ENCODE measurements at regions of chr19 and their contacts with region 1.

Region 1: DNA sequence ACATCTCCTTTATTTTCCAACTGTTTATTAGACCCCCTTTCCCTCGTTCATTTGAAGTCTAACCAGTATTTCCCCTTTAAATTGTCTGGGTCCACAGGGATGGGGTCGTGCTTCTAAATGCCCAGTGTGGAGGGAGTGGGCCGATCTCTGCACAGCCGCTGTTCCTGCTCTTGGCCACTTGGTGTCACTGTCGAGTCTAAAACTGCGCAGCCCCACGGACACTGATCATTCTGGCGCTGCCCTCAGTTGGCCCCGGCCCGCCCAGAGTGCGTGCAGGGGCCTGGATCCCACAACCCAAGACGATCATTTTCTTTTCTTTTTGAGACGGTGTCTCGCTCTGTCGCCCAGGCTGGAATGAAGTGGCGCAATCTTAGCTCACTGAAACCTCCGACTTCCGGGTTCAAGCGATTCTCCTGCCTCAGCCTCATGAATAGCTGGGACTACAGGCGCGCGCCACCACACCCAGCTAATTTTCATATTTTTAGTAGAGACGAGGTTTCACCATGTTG is 12.0 kb downstream of the WDR88 start:
- DNase-seq: peak; percentile 51 to 84
- ATAC-seq: peak; percentile 94 to 100 (median 100)
- H3K4me3 ChIP-seq: no peak overlapping the region
- H3K4me3 Mint-ChIP-seq: no peak overlapping the region
- H3K27ac ChIP-seq: no peak overlapping the region
- H3K27ac Mint-ChIP-seq: peak overlapping the region in 1 of 2 donors; percentile 13
- H3K4me1 ChIP-seq: peaks cover 5% of the 10 kb centered on the region
- H3K4me1 Mint-ChIP-seq: peaks cover 5 to 7% of the 10 kb centered on the region in 2 donors
- H3K27me3 ChIP-seq: no peaks in the 10 kb centered on the region
- H3K27me3 Mint-ChIP-seq: peaks cover 0 to 7% of the 10 kb centered on the region in 2 donors
- CTCF ChIP-seq: peak; percentile 96

Region 2: GRCh38 chr19:33175886-33176669 is 32.1 kb after region 1 on chr19:
- intact Hi-C with region 1: no loop called
- DNase-seq: peak; percentile 23 to 55
- ATAC-seq: no peak
- H3K4me3 ChIP-seq: peak overlapping the region; percentile 85
- H3K4me3 Mint-ChIP-seq: peak overlapping the region; percentile 100
- H3K27ac ChIP-seq: peak overlapping the region; percentile 86
- H3K27ac Mint-ChIP-seq: peak overlapping the region; percentile 100
- H3K4me1 ChIP-seq: peaks cover 39% of the 10 kb centered on the region
- H3K4me1 Mint-ChIP-seq: peaks cover 48 to 57% of the 10 kb centered on the region in 2 donors
- H3K27me3 ChIP-seq: no peaks in the 10 kb centered on the region
- H3K27me3 Mint-ChIP-seq: peaks cover 5 to 6% of the 10 kb centered on the region in 2 donors
- CTCF ChIP-seq: no peak

Region 3: GRCh38 chr19:33186431-33187182 is 42.7 kb after region 1 on chr19:
- intact Hi-C with region 1: loop called (anchors 1 kb)
- DNase-seq: no peak
- ATAC-seq: peak in 2 of 3 donors; percentile 54
- H3K4me3 ChIP-seq: no peak overlapping the region
- H3K4me3 Mint-ChIP-seq: peak overlapping the region; percentile 59
- H3K27ac ChIP-seq: no peak overlapping the region
- H3K27ac Mint-ChIP-seq: no peak overlapping the region
- H3K4me1 ChIP-seq: peaks cover 14% of the 10 kb centered on the region
- H3K4me1 Mint-ChIP-seq: peaks cover 10 to 13% of the 10 kb centered on the region in 2 donors
- H3K27me3 ChIP-seq: no peaks in the 10 kb centered on the region
- H3K27me3 Mint-ChIP-seq: peaks cover 14 to 17% of the 10 kb centered on the region in 2 donors
- CTCF ChIP-seq: no peak

Measured in natural killer cell (primary cell).